CD8-positive, alpha-beta memory T cell (primary cell): ENCODE measurements at regions of chr5 and their contacts with region 1.

Region 1: DNA sequence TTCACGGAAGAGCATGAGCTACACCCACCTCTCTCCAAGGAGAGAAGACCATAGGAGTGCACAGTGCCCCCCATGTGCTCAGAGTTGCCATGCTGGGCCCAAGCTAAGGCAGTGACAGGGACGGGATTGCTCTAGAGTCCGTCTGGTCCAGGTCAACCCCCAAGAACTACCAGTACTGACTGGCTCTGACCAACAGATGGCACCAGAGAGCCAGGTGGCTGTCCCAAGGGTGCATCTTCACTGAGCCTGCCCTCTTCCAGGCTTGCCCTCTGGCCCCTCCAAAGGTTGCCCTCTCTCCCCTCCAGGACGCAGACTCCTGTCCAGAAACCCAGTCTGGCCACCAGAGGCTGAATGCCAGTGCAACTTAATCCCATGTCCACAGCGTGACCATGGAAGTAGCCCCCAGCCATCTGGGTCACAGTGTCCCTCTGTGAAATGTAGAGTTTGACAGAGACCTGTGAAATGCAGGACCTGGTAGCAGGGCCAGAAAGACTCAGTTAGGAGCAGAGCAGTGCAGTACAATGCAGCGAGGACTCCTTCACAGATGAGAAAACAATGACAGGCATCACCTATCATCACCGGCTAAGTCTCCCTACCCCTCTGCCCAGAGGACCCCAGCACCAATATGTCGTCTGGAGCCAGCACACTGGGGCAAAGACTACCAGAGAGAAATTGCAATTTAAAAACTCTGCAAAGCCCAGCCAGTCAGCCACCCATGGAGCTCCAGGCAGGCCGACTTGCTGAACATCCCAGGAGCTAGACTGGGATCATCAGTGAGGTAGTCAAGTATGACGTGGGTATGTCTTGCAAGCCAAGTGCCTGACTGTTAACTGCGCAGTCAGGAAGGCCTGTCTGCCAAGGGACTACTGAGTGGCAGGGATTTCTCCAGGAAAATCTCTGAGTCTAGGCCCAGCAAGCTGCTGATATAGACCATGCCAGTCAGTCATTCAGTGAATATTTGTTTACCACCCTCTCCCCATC is 7.7 kb upstream of the SKP1 start:
- DNase-seq: peak; percentile 64 to 85 (median 68)
- H3K4me3 ChIP-seq: no peak overlapping the region
- H3K4me3 Mint-ChIP-seq: peak overlapping the region in 1 of 7 donors; percentile 43
- H3K27ac ChIP-seq: no peak overlapping the region
- H3K27ac Mint-ChIP-seq: peak overlapping the region in 2 of 8 donors; percentile 22 to 29
- H3K4me1 ChIP-seq: no peaks in the 10 kb centered on the region
- H3K4me1 Mint-ChIP-seq: no peaks in the 10 kb centered on the region
- H3K27me3 ChIP-seq: no peaks in the 10 kb centered on the region
- H3K27me3 Mint-ChIP-seq: peaks cover 0 to 1% of the 10 kb centered on the region in 2 donors

Region 2: GRCh38 chr5:134289509-134290113 is 105.2 kb after region 1 on chr5:
- CTCF ChIA-PET with region 1: interaction called, 70 read pairs
- POLR2A ChIA-PET with region 1: no interaction called
- DNase-seq: peak; percentile 2 to 60 (median 42)
- H3K4me3 ChIP-seq: no peak overlapping the region
- H3K4me3 Mint-ChIP-seq: no peak overlapping the region
- H3K27ac ChIP-seq: no peak overlapping the region
- H3K27ac Mint-ChIP-seq: no peak overlapping the region
- H3K4me1 ChIP-seq: no peaks in the 10 kb centered on the region
- H3K4me1 Mint-ChIP-seq: no peaks in the 10 kb centered on the region
- H3K27me3 ChIP-seq: no peaks in the 10 kb centered on the region
- H3K27me3 Mint-ChIP-seq: peaks cover 2 to 13% of the 10 kb centered on the region in 2 donors

Region 3: DNA sequence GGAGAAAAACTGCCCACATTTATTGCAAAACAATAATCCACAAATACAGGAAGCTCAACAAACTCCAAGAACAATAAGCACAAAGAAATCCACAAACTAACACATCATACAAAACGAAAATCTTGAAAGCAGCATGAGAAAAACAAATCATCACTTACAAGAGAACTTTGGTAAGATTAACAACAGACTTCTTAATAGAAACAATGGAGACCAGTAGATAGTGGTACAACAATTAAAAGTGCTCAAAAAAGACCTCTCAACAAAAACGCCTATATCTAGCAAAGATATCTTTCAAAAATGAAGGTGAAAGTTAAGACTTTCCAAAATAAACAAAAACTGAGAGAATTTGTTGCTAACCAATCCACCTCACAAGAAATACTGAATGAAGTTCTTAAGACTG is 144.2 kb after region 1 on chr5:
- CTCF ChIA-PET with region 1: no interaction called
- POLR2A ChIA-PET with region 1: no interaction called
- DNase-seq: no peak
- H3K4me3 ChIP-seq: no peak overlapping the region
- H3K4me3 Mint-ChIP-seq: no peak overlapping the region
- H3K27ac ChIP-seq: no peak overlapping the region
- H3K27ac Mint-ChIP-seq: no peak overlapping the region
- H3K4me1 ChIP-seq: no peaks in the 10 kb centered on the region
- H3K4me1 Mint-ChIP-seq: no peaks in the 10 kb centered on the region
- H3K27me3 ChIP-seq: no peaks in the 10 kb centered on the region
- H3K27me3 Mint-ChIP-seq: peaks cover 0 to 7% of the 10 kb centered on the region in 2 donors